Aorta (tissue), 5 donors: ENCODE measurements at regions of chrX and their contacts with region 1.

Region 1: GRCh38 chrX:121649417-121649816 is 602.0 kb downstream of the GLUD2 start:
- DNase-seq: no peak
- ATAC-seq: no peak
- H3K4me3 ChIP-seq: no peak overlapping the region
- H3K27ac ChIP-seq: no peak overlapping the region
- H3K4me1 ChIP-seq: no peaks in the 10 kb centered on the region
- H3K27me3 ChIP-seq: no peaks in the 10 kb centered on the region

Region 2: GRCh38 chrX:121374471-121374870 is 274.9 kb before region 1 on chrX:
- intact Hi-C with region 1: loop called in 1 of 2 experiments (anchors 5 kb)
- DNase-seq: no peak
- ATAC-seq: no peak
- H3K4me3 ChIP-seq: no peak overlapping the region
- H3K27ac ChIP-seq: no peak overlapping the region
- H3K4me1 ChIP-seq: no peaks in the 10 kb centered on the region
- H3K27me3 ChIP-seq: no peaks in the 10 kb centered on the region

Region 3: DNA sequence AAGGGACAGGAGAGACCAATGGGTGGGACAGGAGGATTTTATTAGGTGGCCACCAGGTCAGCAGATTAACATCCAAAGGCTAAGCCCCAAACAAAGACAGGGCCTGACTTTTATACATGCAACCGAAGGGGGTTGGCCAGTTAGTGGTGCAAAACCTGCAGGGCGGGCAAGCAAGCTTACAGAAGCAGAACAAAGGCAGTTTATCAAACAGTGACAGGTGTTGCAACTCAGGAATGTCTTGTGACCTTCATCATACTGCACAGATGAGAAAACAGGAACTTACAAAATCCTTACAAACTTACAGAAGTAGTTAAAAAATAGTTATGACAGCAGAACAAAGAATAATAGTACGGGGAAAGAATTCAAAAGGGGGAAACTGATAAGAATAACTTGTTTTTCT is 106.1 kb after region 1 on chrX:
- intact Hi-C with region 1: no loop called
- DNase-seq: no peak
- ATAC-seq: no peak
- H3K4me3 ChIP-seq: no peak overlapping the region
- H3K27ac ChIP-seq: no peak overlapping the region
- H3K4me1 ChIP-seq: no peaks in the 10 kb centered on the region
- H3K27me3 ChIP-seq: no peaks in the 10 kb centered on the region